ENCODE measurements at regions of chr4 and their contacts with region 1.

Region 1: DNA sequence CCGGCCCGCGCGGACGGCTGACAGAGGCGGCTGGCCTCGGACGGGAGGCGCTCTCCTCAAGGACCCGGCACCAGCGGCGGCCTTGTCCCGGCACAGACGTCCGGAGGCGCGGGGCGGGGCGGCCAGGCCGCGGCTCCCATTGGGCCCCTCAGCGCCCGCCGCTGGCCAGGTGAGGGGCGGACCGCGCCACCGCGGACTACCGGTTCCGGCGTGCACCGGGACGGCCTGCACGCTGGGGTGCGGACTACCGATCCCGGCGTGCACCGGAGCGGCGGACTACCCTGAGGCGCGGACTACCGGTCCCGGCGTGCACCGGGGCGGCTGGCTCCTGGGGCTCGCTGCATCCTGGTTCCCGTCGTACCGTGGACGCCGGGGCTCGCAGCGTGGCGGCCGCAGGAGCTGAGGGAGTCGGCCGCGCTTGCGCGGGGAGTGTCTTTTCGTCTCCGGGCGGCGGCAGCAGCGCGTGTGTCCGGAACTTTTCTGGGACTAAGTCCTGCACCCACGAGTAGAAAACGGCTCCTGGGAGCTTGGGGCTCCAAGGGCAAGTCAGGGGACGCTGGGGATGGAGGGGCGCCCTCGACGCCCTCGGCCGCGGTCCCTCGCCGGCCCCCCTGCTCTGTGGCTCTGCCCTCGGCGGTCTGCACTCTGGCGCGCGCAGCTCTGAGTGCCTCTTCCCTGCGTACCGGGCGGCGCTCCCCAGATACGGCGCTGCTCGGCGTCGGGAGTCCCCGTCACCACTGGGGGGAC is at the start of gene LETM1:
- DNase-seq: peak; percentile 95
- H3K4me3 ChIP-seq: peak within 1 kb of the TSS; percentile 99
- H3K27ac ChIP-seq: peak within 1 kb of the TSS; percentile 28
- H3K4me1 ChIP-seq: peaks cover 15% of the 10 kb centered on the region
- CTCF ChIP-seq: no peak
- total RNA-seq, gene LETM1: 58.3 and 60.0 TPM in 2 replicates

Region 2: GRCh38 chr4:1721004-1721665 is 135.1 kb before region 1 on chr4 and contains the starts of genes TACC3 and TMEM129:
- CTCF ChIA-PET with region 1: no interaction called
- POLR2A ChIA-PET with region 1: no interaction called
- intact Hi-C with region 1: loop called (anchors 1 kb)
- DNase-seq: peak; percentile 98
- H3K4me3 ChIP-seq: peak within 1 kb of the TSS; percentile 94
- H3K27ac ChIP-seq: peak within 1 kb of the TSS; percentile 90
- H3K4me1 ChIP-seq: peaks cover 75% of the 10 kb centered on the region
- CTCF ChIP-seq: no peak
- total RNA-seq, gene TACC3: 100 and 130 TPM in 2 replicates
- total RNA-seq, gene TMEM129: 35.1 and 44.0 TPM in 2 replicates

Region 3: DNA sequence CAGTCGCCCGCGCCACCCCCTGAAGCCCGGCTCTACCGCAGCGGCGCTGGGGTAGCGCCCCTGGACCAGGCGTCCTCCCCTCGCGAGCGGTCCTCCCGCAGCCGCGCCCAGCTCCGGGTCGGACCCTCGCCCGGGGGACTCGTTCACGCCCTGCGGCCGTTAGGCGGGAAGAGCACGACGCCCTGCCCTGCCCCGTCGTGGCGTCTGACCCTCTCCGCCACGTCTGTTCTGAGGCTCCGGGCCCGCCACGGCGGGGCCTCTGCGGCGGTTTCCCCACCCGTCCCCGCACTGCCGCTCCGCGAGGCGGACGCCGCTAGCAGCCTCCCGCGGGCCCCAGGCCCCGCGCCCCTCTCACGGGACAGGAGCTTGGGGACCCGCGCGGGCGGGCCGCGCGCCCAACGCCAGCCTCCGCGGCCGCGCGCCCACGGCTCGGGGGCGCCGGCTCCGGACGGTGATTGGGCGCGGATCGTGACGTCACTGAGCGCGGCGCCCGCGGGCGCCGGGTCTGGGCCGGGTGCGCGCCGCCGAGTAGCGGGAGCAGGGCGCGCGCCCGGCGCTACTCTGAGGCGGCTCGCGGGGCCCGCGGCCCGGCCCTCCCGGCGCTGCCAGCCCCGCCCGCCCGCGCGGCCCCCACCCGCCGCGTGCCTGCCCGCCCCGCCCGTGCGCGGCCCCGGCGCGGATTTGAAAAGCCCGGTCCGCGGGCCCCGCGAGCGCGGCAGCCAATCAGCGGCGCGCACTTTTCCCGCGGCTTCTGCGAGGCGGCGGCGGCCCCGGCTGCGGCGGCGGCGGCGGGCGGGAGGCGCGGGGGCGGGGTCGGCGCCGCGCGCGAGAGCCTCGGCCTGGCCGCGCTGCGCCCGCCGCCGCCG is 14.6 kb after region 1 on chr4 and contains the start of gene NSD2:
- CTCF ChIA-PET with region 1: no interaction called
- POLR2A ChIA-PET with region 1: interaction called, 4 read pairs
- intact Hi-C with region 1: loop called (anchors 1 kb)
- DNase-seq: peak; percentile 94
- H3K4me3 ChIP-seq: peak within 1 kb of the TSS; percentile 94
- H3K27ac ChIP-seq: peak within 1 kb of the TSS; percentile 88
- H3K4me1 ChIP-seq: peaks cover 33% of the 10 kb centered on the region
- CTCF ChIP-seq: no peak
- total RNA-seq, gene NSD2: 158 and 169 TPM in 2 replicates

Region 4: DNA sequence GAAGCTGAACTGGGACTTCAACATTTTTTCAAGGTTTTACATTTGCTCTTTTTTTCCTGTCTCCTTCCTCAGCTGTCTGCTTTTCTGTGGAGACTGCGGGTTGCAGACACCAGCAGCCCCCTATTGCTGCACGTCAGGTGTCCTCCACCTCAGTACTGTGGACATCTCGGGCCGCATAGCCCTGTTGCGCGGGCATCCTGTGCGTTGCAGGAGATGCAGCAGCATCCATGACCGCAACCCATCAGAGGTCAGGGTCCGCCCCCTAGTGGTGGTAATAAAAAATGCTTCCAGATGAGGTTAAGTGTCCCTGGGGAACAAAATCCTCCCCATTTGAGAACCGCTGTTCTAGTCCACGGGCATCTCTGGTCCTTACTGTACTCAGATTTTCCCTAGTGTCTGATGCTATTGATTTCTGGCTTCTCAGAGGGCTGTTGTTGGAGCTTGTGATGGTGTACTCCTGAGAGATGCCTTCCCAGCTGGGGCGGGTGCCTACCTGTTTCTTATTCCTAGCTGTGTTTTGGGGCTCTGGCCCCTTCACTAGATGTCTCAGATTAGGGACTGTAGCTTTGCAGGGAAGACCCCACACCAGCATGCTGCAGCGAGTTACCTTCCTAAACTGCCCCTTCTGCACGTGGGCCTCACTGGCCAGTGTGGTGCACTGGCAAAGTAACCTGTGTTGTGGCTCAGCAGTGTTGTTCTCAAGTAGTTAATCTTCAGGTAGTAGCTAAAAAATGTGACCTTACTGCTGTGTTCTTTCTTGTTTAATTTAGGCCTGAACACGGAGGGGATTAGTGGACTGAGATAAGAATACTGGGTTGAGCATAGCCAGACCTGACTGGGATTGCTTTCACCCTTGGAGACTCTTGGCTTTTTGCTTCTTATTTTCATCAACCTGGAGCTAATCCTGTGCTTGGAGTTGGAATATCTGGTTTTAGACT is 43.2 kb after region 1 on chr4:
- CTCF ChIA-PET with region 1: no interaction called
- POLR2A ChIA-PET with region 1: no interaction called
- intact Hi-C with region 1: loop called (anchors 2 kb)
- DNase-seq: peak; percentile 83
- H3K4me3 ChIP-seq: no peak overlapping the region
- H3K27ac ChIP-seq: peak overlapping the region; percentile 52
- H3K4me1 ChIP-seq: peaks cover 14% of the 10 kb centered on the region
- CTCF ChIP-seq: peak; percentile 95

Measured in OCI-LY7 (cell line).